ENCODE measurements at regions of chr11 and their contacts with region 1.

Region 1: GRCh38 chr11:79062814-79063762 is 377.7 kb downstream of the TENM4 start:
- DNase-seq: peak; percentile 18
- ATAC-seq: peak; percentile 88
- H3K4me3 ChIP-seq: no peak overlapping the region
- H3K27ac ChIP-seq: no peak overlapping the region
- H3K4me1 ChIP-seq: no peaks in the 10 kb centered on the region
- H3K27me3 ChIP-seq: 0 out of 5 replicates have a peak, but pooled peaks cover 0 to 4% of the 10 kb centered on the region in 2 experiments
- CTCF ChIP-seq: peak; percentile 57
- EP300 ChIP-seq: no peak
- POLR2A ChIP-seq: no peak
- RAD21 ChIP-seq: no peak

Region 2: DNA sequence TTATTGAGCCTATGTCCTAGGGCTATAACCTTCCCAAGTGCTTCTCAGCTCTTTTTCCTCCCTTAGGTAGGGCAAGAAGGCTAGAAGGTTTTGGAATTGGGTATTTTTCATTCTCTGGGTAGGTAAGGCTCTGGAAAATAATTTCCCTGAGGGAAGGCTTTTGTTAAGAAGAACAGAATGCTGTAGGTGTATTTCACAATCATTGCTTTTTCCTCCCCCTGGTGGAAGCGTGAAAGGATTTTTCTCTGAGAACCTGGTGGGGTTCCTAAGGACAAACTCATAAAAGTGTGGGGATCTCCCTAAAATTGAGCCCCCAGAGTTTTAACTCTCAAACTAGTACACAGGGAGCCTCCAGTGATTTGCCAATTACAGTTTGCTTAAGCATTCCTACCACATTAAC is 447.4 kb before region 1 on chr11:
- CTCF ChIA-PET with region 1: no interaction called
- POLR2A ChIA-PET with region 1: no interaction called
- in situ Hi-C with region 1: no loop called
- intact Hi-C with region 1: no loop called
- DNase-seq: peak; percentile 21
- ATAC-seq: no peak; the same call in 2 of the 3 replicates
- H3K4me3 ChIP-seq: no peak overlapping the region
- H3K27ac ChIP-seq: no peak overlapping the region
- H3K4me1 ChIP-seq: peaks cover 53% of the 10 kb centered on the region
- H3K27me3 ChIP-seq: no peaks in the 10 kb centered on the region
- CTCF ChIP-seq: peak; percentile 32
- EP300 ChIP-seq: no peak
- POLR2A ChIP-seq: no peak
- RAD21 ChIP-seq: no peak

Region 3: GRCh38 chr11:79052544-79052943 is 10.5 kb before region 1 on chr11:
- CTCF ChIA-PET with region 1: no interaction called
- POLR2A ChIA-PET with region 1: no interaction called
- in situ Hi-C with region 1: no loop called
- intact Hi-C with region 1: no loop called
- DNase-seq: no peak
- ATAC-seq: peak; percentile 49; the same call in 2 of the 3 replicates
- H3K4me3 ChIP-seq: no peak overlapping the region
- H3K27ac ChIP-seq: no peak overlapping the region
- H3K4me1 ChIP-seq: peaks cover 22% of the 10 kb centered on the region
- H3K27me3 ChIP-seq: no peaks in the 10 kb centered on the region
- CTCF ChIP-seq: peak; percentile 31
- EP300 ChIP-seq: no peak
- POLR2A ChIP-seq: no peak
- RAD21 ChIP-seq: no peak

Region 4: DNA sequence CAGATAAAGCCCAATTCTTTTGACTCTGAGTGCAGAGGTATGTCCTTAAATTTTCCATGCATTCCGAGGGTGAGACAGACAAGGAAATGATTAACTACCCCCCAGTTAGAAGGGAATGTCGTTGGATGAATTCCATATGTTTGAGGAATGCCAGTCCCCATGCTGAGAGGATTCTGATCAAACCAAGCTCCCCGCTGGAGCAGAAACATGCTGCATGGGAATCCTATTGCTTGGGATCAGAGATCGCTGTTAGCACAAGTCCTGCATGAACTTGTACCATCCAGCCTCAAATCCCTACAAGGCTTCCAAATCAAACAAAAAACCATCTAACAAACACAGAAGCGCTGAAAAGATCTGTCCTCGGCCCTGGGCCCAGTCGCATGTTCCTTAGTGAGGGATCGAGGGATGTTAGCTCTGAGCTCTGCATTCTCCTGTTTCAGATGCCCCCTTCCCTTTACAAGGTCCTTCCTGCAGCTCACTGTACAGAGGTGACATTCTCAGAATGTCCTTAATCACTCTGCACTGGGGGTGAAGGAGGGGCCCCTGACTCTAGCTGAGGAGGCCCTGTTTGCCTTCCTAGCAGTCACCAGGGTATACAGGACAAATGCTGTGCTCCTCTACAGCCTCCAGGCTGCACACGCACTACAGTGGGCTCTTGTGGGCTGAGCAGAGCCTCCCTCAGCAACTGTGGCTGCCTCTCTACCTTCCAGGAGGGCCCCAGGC is 24.3 kb after region 1 on chr11:
- CTCF ChIA-PET with region 1: no interaction called
- POLR2A ChIA-PET with region 1: no interaction called
- in situ Hi-C with region 1: no loop called
- intact Hi-C with region 1: no loop called
- DNase-seq: peak; percentile 84
- ATAC-seq: peak; percentile 89
- H3K4me3 ChIP-seq: peak overlapping the region in 2 of 3 experiments; percentile 0 to 27; a peak in 3 of 6 replicates
- H3K27ac ChIP-seq: no peak overlapping the region
- H3K4me1 ChIP-seq: peaks cover 27% of the 10 kb centered on the region
- H3K27me3 ChIP-seq: no peaks in the 10 kb centered on the region
- CTCF ChIP-seq: no peak
- EP300 ChIP-seq: no peak
- POLR2A ChIP-seq: no peak
- RAD21 ChIP-seq: no peak

Region 5: DNA sequence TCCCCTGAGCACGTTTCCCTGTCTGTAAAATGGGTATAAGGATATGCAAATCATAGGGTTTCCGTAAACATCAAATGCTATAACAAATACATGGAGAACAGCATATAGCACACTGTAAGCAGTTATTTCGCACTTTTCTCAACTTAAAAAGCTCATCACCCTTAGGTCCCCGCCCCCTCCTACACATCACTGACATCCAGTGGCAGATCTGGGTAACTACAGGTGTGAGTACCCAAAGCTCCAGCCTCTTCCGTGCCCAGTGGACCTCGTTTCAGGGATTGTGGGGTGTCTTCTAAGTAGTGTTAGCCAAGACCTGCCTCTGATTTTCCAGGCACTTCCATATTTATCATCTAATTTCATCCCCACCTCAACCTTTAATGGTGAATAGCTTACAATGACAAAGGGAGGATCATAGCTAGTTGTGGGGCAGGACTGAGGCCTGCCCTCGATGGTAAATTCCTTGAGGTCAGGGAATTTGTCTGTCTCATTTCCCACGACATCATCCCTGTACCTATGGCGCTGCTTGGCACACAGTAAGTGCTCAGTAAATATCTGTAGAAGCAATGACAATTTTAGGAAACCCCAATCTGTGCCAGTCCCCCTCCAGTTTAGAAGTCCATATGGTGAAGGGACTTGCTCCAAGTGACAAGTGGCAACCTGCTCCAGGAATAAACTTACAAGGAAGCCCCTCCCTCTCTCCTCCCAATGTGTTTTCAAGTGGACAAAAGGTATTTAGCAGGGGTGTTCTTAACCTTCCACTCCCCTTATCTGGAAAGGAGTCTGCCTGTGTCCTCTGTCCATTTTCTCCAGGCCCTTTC is 37.2 kb after region 1 on chr11:
- CTCF ChIA-PET with region 1: interaction called, 6 read pairs
- POLR2A ChIA-PET with region 1: no interaction called
- in situ Hi-C with region 1: no loop called
- intact Hi-C with region 1: loop called (anchors 1 kb)
- DNase-seq: peak; percentile 45
- ATAC-seq: peak; percentile 96
- H3K4me3 ChIP-seq: no peak overlapping the region
- H3K27ac ChIP-seq: no peak overlapping the region
- H3K4me1 ChIP-seq: no peaks in the 10 kb centered on the region
- H3K27me3 ChIP-seq: peaks cover 0 to 3% of the 10 kb centered on the region in 2 experiments; a peak in 2 of 5 replicates
- CTCF ChIP-seq: peak; percentile 83
- EP300 ChIP-seq: no peak
- POLR2A ChIP-seq: no peak
- RAD21 ChIP-seq: peak; percentile 50; the same call in 1 of the 2 replicates

Measured in HepG2 (cell line).